ENCODE measurements at regions of chr12 and their contacts with region 1.

Region 1: DNA sequence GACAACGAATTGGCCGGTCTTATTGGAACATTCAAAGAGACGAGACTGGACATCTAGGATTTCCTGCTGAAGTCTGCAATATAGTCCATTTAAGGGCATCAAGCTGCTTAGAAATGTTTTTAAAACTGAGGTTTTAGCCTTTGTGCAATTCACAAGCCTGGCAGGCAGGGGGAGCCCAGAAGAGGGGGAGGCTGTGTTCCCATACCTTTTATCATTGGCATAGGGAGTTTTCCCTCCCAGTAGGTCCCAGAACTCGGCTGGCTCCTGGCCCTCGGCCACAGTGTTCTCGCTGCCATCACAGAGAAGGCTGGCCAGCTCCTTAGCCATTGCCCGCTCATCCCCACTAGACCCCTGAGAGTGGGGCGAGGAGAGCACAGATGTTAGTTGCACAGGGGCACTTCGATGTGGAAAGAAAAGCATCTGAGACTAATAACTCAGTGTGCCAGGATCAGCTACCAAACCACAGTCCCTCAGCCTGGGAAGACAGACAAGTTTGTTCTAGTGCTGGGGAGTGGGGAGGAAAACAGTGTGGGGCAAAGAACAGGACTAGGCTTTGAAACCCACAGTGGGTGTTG is 15.1 kb downstream of the AVIL start:
- DNase-seq: peak; percentile 49
- ATAC-seq: no peak
- H3K4me3 Mint-ChIP-seq: no peak overlapping the region
- H3K27ac Mint-ChIP-seq: no peak overlapping the region
- H3K4me1 Mint-ChIP-seq: no peaks in the 10 kb centered on the region
- H3K27me3 Mint-ChIP-seq: no peaks in the 10 kb centered on the region

Region 2: DNA sequence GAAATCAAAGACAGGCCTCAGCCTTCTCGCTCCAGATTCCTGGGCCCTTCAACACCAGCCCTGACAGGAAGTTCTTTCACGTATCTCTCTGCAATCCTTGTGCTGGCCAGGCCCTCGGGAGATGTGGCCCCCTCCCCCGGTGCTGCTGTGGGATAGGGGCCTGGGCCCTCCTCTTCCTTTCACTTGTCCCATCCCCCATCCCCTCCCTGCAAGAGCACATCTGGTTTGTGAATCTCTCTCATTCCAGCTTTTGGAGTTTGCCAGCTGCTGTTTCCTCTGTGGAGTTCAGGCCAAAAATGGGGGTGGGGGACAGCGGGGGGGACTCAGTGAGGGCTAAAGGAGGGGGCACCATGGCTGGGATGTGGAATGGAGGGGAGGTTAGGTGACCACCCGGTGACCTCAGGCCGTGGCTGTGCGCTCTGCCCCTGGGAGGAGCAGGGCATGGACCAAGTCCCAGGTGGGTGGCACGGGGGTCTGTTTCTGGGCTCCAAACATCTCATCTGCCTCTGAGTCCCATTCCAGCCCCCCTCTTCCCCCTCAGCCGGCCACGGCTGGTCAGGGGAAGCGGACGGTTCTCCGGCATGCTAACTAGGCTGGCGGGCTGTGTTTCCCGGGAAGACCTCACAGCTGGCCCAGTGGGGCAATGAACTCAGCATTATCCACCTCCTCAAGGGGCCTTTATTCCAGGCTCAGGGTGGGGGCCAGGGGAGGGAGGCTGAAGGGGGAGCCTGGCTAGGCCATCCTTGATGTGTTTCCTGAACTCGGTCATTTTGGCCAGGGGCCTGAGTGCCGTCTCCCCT is 667.7 kb before region 1 on chr12:
- CTCF ChIA-PET with region 1: no interaction called
- DNase-seq: no peak
- ATAC-seq: no peak
- H3K4me3 Mint-ChIP-seq: no peak overlapping the region
- H3K27ac Mint-ChIP-seq: no peak overlapping the region
- H3K4me1 Mint-ChIP-seq: no peaks in the 10 kb centered on the region
- H3K27me3 Mint-ChIP-seq: peaks cover 21% of the 10 kb centered on the region

Region 3: GRCh38 chr12:57813971-57814772 is 10.8 kb after region 1 on chr12:
- CTCF ChIA-PET with region 1: interaction called, 10 read pairs
- DNase-seq: no peak
- ATAC-seq: no peak
- H3K4me3 Mint-ChIP-seq: no peak overlapping the region
- H3K27ac Mint-ChIP-seq: no peak overlapping the region
- H3K4me1 Mint-ChIP-seq: no peaks in the 10 kb centered on the region
- H3K27me3 Mint-ChIP-seq: no peaks in the 10 kb centered on the region